Vagina (tissue), 2 donors: ENCODE measurements at regions of chr5 and their contacts with region 1.

Region 1: GRCh38 chr5:171630027-171630669 is 155.5 kb upstream of the SMIM23 start:
- DNase-seq: no peak
- H3K4me3 ChIP-seq: peak overlapping the region in 1 of 2 donors; percentile 7
- H3K27ac ChIP-seq: no peak overlapping the region
- H3K4me1 ChIP-seq: peaks cover 8% of the 10 kb centered on the region
- H3K27me3 ChIP-seq: no peaks in the 10 kb centered on the region
- CTCF ChIP-seq: peak in 2 of 3 experiments; percentile 19 to 33
- POLR2A ChIP-seq: no peak

Region 2: GRCh38 chr5:170722316-170722715 is 907.8 kb before region 1 on chr5:
- intact Hi-C with region 1: no loop called
- DNase-seq: no peak
- H3K4me3 ChIP-seq: no peak overlapping the region
- H3K27ac ChIP-seq: no peak overlapping the region
- H3K4me1 ChIP-seq: no peaks in the 10 kb centered on the region
- H3K27me3 ChIP-seq: no peaks in the 10 kb centered on the region
- CTCF ChIP-seq: no peak
- POLR2A ChIP-seq: no peak

Region 3: DNA sequence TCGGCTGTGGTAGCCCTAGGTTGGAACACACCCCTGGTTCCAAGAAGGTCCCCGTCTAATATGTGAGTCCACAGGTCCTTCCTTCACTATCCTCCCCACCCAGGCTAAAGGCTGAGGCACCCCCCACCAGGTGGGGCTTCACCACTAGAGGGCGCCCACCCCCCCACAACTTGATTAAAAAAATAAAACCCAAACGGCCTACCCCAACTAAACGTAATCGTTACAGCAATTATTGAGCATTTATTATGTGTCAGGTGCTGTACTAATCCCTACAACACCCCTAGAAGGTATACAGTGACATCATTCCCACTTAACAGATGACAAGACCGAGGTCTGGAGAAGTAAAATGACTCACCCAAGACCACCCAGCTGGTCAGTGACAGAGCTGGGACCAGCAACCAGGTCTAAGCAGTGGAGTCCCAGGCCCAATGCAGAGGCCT is 145.7 kb before region 1 on chr5:
- intact Hi-C with region 1: loop called (anchors 10 kb)
- DNase-seq: no peak
- H3K4me3 ChIP-seq: no peak overlapping the region
- H3K27ac ChIP-seq: no peak overlapping the region
- H3K4me1 ChIP-seq: peaks cover 6% of the 10 kb centered on the region
- H3K27me3 ChIP-seq: no peaks in the 10 kb centered on the region
- CTCF ChIP-seq: peak in 2 of 3 experiments; percentile 39 to 42
- POLR2A ChIP-seq: no peak

Region 4: GRCh38 chr5:171571663-171572062 is 58.5 kb before region 1 on chr5:
- intact Hi-C with region 1: no loop called
- DNase-seq: no peak
- H3K4me3 ChIP-seq: no peak overlapping the region
- H3K27ac ChIP-seq: no peak overlapping the region
- H3K4me1 ChIP-seq: no peaks in the 10 kb centered on the region
- H3K27me3 ChIP-seq: no peaks in the 10 kb centered on the region
- CTCF ChIP-seq: no peak
- POLR2A ChIP-seq: no peak